ENCODE measurements at regions of chr10 and their contacts with region 1.

Region 1: GRCh38 chr10:52779541-52780390 is 7.2 kb upstream of the MBL2 start:
- DNase-seq: peak in 3 of 9 donors; percentile 2 to 49 (median 11)
- ATAC-seq: peak; percentile 63
- H3K4me3 ChIP-seq: no peak overlapping the region
- H3K4me3 Mint-ChIP-seq: no peak overlapping the region
- H3K27ac ChIP-seq: no peak overlapping the region
- H3K27ac Mint-ChIP-seq: no peak overlapping the region
- H3K4me1 ChIP-seq: no peaks in the 10 kb centered on the region
- H3K4me1 Mint-ChIP-seq: no peaks in the 10 kb centered on the region
- H3K27me3 ChIP-seq: no peaks in the 10 kb centered on the region
- H3K27me3 Mint-ChIP-seq: peaks cover 0 to 4% (median 0%) of the 10 kb centered on the region in 5 donors

Region 2: DNA sequence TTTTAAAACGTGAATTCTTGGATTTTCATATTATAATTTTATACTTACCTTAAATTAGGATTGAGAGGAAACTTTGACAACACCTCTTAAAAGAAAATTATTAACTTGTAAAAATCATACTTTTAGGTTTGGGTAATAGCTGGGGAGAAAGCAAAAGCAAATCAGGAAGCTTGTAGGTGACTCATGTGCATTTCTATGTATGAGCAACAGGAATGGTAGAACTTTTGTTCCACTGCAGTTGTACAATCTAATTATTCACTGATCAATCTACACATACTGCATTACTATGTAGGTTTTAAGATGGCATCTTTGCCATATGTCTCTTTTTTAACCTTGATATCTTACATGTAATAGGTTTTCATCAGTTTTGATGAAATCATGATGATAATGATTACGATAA is 1482.3 kb before region 1 on chr10:
- CTCF ChIA-PET with region 1: no interaction called
- POLR2A ChIA-PET with region 1: no interaction called
- intact Hi-C with region 1: no loop called
- DNase-seq: no peak
- ATAC-seq: no peak
- H3K4me3 ChIP-seq: no peak overlapping the region
- H3K4me3 Mint-ChIP-seq: no peak overlapping the region
- H3K27ac ChIP-seq: no peak overlapping the region
- H3K27ac Mint-ChIP-seq: no peak overlapping the region
- H3K4me1 ChIP-seq: no peaks in the 10 kb centered on the region
- H3K4me1 Mint-ChIP-seq: no peaks in the 10 kb centered on the region
- H3K27me3 ChIP-seq: no peaks in the 10 kb centered on the region
- H3K27me3 Mint-ChIP-seq: no peaks in the 10 kb centered on the region

Region 3: GRCh38 chr10:52644373-52645186 is 135.2 kb before region 1 on chr10:
- CTCF ChIA-PET with region 1: interaction called, 3 read pairs
- POLR2A ChIA-PET with region 1: no interaction called
- intact Hi-C with region 1: loop called in 1 of 2 experiments (anchors 1 kb)
- DNase-seq: peak in 1 of 9 donors; percentile 3
- ATAC-seq: no peak
- H3K4me3 ChIP-seq: no peak overlapping the region
- H3K4me3 Mint-ChIP-seq: no peak overlapping the region
- H3K27ac ChIP-seq: no peak overlapping the region
- H3K27ac Mint-ChIP-seq: no peak overlapping the region
- H3K4me1 ChIP-seq: no peaks in the 10 kb centered on the region
- H3K4me1 Mint-ChIP-seq: peaks cover 0 to 1% (median 0%) of the 10 kb centered on the region in 7 donors
- H3K27me3 ChIP-seq: no peaks in the 10 kb centered on the region
- H3K27me3 Mint-ChIP-seq: no peaks in the 10 kb centered on the region

Region 4: GRCh38 chr10:52740913-52741675 is 38.7 kb before region 1 on chr10:
- CTCF ChIA-PET with region 1: no interaction called
- POLR2A ChIA-PET with region 1: no interaction called
- intact Hi-C with region 1: loop called in 1 of 2 experiments (anchors 1 kb)
- DNase-seq: peak in 3 of 9 donors; percentile 2 to 26 (median 18)
- ATAC-seq: peak; percentile 34
- H3K4me3 ChIP-seq: no peak overlapping the region
- H3K4me3 Mint-ChIP-seq: no peak overlapping the region
- H3K27ac ChIP-seq: no peak overlapping the region
- H3K27ac Mint-ChIP-seq: no peak overlapping the region
- H3K4me1 ChIP-seq: no peaks in the 10 kb centered on the region
- H3K4me1 Mint-ChIP-seq: no peaks in the 10 kb centered on the region
- H3K27me3 ChIP-seq: no peaks in the 10 kb centered on the region
- H3K27me3 Mint-ChIP-seq: no peaks in the 10 kb centered on the region

Measured in naive thymus-derived CD4-positive, alpha-beta T cell (primary cell).